ENCODE measurements at regions of chr3 and their contacts with region 1.

Region 1: GRCh38 chr3:197756704-197757103 is 7.0 kb downstream of the FYTTD1 start:
- DNase-seq: no peak
- ATAC-seq: no peak
- H3K4me3 Mint-ChIP-seq: no peak overlapping the region
- H3K27ac Mint-ChIP-seq: no peak overlapping the region
- H3K4me1 Mint-ChIP-seq: peaks cover 32% of the 10 kb centered on the region
- H3K27me3 Mint-ChIP-seq: no peaks in the 10 kb centered on the region
- CTCF ChIP-seq: no peak

Region 2: DNA sequence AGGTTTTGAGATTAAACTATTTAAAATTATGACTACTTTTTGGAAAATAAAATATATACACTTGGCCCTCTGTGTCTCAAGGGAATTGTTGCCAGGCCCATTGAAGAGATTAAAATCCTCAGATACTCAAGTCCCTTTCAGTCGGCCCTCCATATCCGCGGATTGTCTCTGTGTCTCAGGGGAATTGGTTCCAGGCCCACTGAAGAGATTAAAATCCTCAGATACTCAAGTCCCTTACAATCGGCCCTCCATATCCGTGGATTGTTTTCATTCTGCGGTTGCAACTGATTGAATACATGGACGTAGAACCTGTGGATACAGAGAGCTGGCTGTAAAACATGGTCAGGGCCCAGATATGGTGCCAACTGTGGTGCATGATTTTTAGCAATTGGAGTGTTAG is 18.6 kb after region 1 on chr3:
- CTCF ChIA-PET with region 1: no interaction called
- POLR2A ChIA-PET with region 1: no interaction called
- intact Hi-C with region 1: loop called (anchors 2 kb)
- DNase-seq: no peak
- ATAC-seq: no peak
- H3K4me3 Mint-ChIP-seq: no peak overlapping the region
- H3K27ac Mint-ChIP-seq: no peak overlapping the region
- H3K4me1 Mint-ChIP-seq: peaks cover 18% of the 10 kb centered on the region
- H3K27me3 Mint-ChIP-seq: no peaks in the 10 kb centered on the region
- CTCF ChIP-seq: no peak

Measured in activated B cell treated with CpG ODN at 0.5 μM for 24 hours (primary cell).